AG04450 (cell line): ENCODE measurements at regions of chr5 and their contacts with region 1.

Region 1: DNA sequence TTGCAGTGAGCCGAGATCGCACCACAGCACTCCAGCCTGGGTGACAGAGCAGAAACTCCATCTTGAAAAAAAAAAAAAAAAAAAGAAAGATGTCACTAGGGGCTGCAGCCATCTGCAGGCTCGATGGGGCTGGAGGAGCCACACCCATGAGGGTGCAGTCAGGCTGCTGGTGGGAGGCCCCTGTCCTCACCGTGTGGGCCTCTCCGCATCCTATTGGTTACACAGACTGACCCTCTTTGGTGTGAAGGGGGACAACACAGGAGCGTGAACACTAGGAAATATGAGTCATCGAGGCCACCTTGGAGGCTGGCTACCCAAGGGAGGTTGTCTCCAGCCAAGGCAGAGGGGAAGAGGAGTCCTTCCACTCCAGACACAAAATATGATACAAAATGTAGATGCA is 14.0 kb upstream of the FAM193B start:
- DNase-seq: no peak
- H3K4me3 ChIP-seq: no peak overlapping the region
- H3K27ac ChIP-seq: no peak overlapping the region
- H3K27me3 ChIP-seq: peaks cover 10% of the 10 kb centered on the region
- CTCF ChIP-seq: no peak

Region 2: DNA sequence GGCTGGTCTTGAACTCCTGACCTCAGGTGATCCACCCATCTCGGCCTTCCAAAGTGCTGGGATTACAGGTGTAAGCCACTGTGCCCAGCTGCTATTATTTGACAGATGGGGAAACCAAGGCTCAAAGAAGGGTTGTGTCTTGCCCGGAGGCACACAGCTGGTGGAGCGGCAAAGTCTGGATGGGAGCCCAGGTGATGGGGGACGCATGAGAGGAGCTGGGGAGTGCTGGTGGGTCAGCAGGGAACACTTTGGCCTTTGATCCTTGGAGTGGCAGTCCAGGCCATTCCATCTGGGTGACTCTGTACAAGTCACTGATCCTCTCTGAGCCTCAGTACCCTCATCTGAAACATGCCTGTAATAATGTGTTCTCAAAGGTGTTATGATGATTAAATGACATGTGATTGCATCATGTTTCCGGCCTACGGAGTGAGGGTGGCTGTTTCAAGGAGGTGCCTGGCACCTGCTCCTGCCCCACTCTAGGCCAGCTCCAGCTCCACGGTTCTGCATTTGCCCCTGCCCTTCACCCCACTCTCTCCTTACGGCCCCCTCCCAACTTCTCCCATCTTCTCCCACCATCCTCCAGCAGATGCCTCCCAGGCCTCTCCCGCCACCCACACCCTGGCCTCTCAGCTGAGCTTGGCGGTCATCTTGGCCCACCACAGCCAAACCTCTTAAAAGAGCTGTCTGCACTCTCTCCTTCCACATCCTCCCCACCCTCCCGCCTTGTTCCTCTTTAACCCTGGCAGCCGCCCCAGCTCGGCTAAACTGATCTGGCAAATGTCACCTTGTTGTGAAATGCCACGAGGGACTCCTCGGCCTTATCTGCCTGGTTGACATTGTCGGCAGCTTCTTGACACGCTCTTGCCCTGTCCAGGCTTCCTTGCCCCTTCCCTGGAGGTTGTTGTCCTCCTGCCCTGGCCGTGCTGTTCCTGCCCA is 89.3 kb before region 1 on chr5:
- CTCF ChIA-PET with region 1: no interaction called
- POLR2A ChIA-PET with region 1: interaction called, 10 read pairs
- DNase-seq: no peak
- H3K4me3 ChIP-seq: no peak overlapping the region
- H3K27ac ChIP-seq: peak overlapping the region; percentile 77
- H3K27me3 ChIP-seq: no peaks in the 10 kb centered on the region
- CTCF ChIP-seq: no peak